ENCODE measurements at regions of chr12 and their contacts with region 1.

Region 1: DNA sequence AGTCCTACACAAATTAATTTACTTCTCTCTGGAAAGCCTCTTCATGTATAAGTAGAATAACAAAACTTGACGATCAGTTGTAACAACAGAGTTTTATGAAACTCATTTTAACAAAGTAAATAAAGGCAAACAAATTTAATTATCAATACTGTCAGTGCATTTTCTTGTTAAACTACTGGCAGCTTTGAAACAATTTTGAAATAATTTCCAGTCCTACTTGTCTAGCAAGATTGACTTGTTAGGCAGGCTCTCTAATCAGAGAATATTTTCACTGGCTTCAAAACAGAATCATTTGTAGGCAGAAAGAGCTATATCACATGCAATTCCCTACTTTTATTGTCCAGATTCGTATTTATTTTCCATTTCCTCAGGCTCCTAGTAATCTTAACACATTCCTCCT is 45.9 kb upstream of the SLC6A13 start:
- DNase-seq: peak in 1 of 2 experiments; percentile 79
- H3K4me3 ChIP-seq: peak overlapping the region; percentile 7; the same call in 1 of the 2 replicates
- H3K27ac ChIP-seq: peak overlapping the region; percentile 28
- H3K4me1 ChIP-seq: peaks cover 24% of the 10 kb centered on the region
- H3K27me3 ChIP-seq: no peaks in the 10 kb centered on the region
- CTCF ChIP-seq: no peak

Region 2: GRCh38 chr12:262113-262512 is 46.4 kb before region 1 on chr12:
- CTCF ChIA-PET with region 1: no interaction called
- POLR2A ChIA-PET with region 1: interaction called, 15 read pairs
- intact Hi-C with region 1: no loop called
- DNase-seq: no peak
- H3K4me3 ChIP-seq: no peak overlapping the region
- H3K27ac ChIP-seq: no peak overlapping the region
- H3K4me1 ChIP-seq: no peaks in the 10 kb centered on the region
- H3K27me3 ChIP-seq: peaks cover 89% of the 10 kb centered on the region
- CTCF ChIP-seq: no peak

Measured in PC-9 (cell line).